ENCODE measurements at regions of chr2 and their contacts with region 1.

Region 1: DNA sequence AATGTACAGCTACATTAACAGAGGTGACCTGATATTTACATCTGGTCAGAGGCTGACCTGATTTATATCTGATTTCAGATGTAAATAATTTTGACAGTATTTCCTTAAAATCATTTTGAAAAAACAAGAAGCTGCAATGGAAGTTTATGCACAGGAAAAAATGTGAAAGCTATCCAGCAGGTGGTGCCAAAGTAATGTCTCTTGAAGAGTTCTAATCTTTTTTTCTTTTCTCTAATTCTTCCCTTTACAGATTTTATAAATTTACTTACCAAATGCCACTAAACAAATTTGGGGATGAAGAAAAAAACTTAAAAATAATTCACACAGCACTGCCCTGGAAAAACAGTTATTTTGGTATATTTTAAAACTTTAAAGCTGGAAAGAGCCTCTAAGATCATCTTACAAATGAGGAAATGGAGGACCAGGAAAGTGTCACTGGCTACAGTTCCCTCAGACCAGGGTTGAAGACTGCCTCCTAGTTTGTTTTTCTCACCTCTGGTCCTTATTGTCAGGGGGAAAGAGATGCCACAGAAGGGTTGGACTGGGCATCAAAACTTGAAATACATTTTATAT is 16.4 kb upstream of the FBLN7 start:
- DNase-seq: peak in 11 of 14 experiments; percentile 20 to 76 (median 45)
- ATAC-seq: no peak
- H3K4me3 ChIP-seq: no peak overlapping the region
- H3K4me3 Mint-ChIP-seq: no peak overlapping the region
- H3K27ac ChIP-seq: no peak overlapping the region
- H3K27ac Mint-ChIP-seq: peak overlapping the region; percentile 35
- H3K4me1 ChIP-seq: no peaks in the 10 kb centered on the region
- H3K4me1 Mint-ChIP-seq: no peaks in the 10 kb centered on the region
- H3K27me3 ChIP-seq: no peaks in the 10 kb centered on the region
- H3K27me3 Mint-ChIP-seq: no peaks in the 10 kb centered on the region
- CTCF ChIP-seq: peak; percentile 80

Region 2: GRCh38 chr2:112108178-112108832 is 13.5 kb before region 1 on chr2:
- CTCF ChIA-PET with region 1: no interaction called
- POLR2A ChIA-PET with region 1: no interaction called
- intact Hi-C with region 1: no loop called
- DNase-seq: no peak
- ATAC-seq: no peak
- H3K4me3 ChIP-seq: no peak overlapping the region
- H3K4me3 Mint-ChIP-seq: no peak overlapping the region
- H3K27ac ChIP-seq: no peak overlapping the region
- H3K27ac Mint-ChIP-seq: no peak overlapping the region
- H3K4me1 ChIP-seq: no peaks in the 10 kb centered on the region
- H3K4me1 Mint-ChIP-seq: no peaks in the 10 kb centered on the region
- H3K27me3 ChIP-seq: no peaks in the 10 kb centered on the region
- H3K27me3 Mint-ChIP-seq: no peaks in the 10 kb centered on the region
- CTCF ChIP-seq: no peak

Region 3: GRCh38 chr2:112134120-112134519 is 12.4 kb after region 1 on chr2:
- CTCF ChIA-PET with region 1: interaction called, 12 read pairs
- POLR2A ChIA-PET with region 1: no interaction called
- intact Hi-C with region 1: no loop called
- DNase-seq: peak in 1 of 14 experiments; percentile 11
- ATAC-seq: no peak
- H3K4me3 ChIP-seq: no peak overlapping the region
- H3K4me3 Mint-ChIP-seq: no peak overlapping the region
- H3K27ac ChIP-seq: no peak overlapping the region
- H3K27ac Mint-ChIP-seq: no peak overlapping the region
- H3K4me1 ChIP-seq: peaks cover 15% of the 10 kb centered on the region
- H3K4me1 Mint-ChIP-seq: peaks cover 13% of the 10 kb centered on the region
- H3K27me3 ChIP-seq: peaks cover 8 to 15% of the 10 kb centered on the region in 2 experiments
- H3K27me3 Mint-ChIP-seq: peaks cover 27% of the 10 kb centered on the region
- CTCF ChIP-seq: no peak

Region 4: DNA sequence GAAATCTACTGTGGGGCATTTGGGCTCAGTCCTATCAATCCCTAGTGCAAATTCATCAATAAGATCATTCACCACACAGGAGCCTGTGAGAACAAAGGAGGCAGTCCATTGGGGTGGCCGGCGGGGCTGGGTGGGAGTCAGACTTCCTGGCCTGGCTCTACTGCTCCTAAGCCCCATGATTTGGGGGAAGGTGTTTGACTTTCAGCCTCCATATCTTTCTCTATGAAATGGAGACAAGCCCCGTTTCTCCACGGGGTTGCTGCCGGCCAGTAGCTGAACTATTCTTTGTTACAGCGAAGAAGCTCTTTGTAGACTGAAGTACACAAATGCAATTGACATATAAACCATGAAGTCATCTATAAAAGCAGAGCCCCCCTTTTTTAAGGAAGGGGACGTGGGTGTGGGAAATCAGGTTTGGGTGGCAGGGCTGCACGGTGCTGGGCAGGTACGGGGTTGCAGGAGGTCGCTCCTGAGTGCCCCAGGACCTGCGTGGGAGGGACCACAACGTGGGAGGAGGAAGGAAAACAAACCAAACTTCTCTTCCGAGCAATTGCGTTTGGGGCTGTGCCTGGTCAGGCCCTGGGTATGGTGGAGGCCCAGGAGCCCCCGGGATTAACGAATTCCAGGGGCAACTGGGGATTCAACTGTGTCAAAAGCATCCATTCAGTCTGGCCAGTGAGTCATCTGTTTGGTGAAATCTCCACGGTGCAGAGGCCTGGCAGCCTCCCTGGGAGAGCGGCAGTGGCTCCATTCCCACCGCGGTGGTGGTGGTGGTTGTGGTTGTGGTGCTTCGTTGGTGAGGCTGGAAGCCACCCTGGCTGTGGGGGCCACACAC is 34.6 kb after region 1 on chr2:
- CTCF ChIA-PET with region 1: interaction called, 3 read pairs
- POLR2A ChIA-PET with region 1: interaction called, 3 read pairs
- intact Hi-C with region 1: loop called in 1 of 2 experiments (anchors 5 kb)
- DNase-seq: peak in 9 of 14 experiments; percentile 11 to 65 (median 44)
- ATAC-seq: no peak
- H3K4me3 ChIP-seq: peak overlapping the region; percentile 47
- H3K4me3 Mint-ChIP-seq: peak overlapping the region; percentile 83
- H3K27ac ChIP-seq: peak overlapping the region; percentile 46 to 60
- H3K27ac Mint-ChIP-seq: peak overlapping the region; percentile 89
- H3K4me1 ChIP-seq: peaks cover 33% of the 10 kb centered on the region
- H3K4me1 Mint-ChIP-seq: peaks cover 31% of the 10 kb centered on the region
- H3K27me3 ChIP-seq: no peaks in the 10 kb centered on the region
- H3K27me3 Mint-ChIP-seq: no peaks in the 10 kb centered on the region
- CTCF ChIP-seq: no peak

Region 5: GRCh38 chr2:112187805-112188596 is 66.2 kb after region 1 on chr2:
- CTCF ChIA-PET with region 1: interaction called, 14 read pairs
- POLR2A ChIA-PET with region 1: no interaction called
- intact Hi-C with region 1: loop called in 1 of 2 experiments (anchors 2 kb)
- DNase-seq: peak; percentile 59 to 93 (median 72)
- ATAC-seq: peak; percentile 82
- H3K4me3 ChIP-seq: peak overlapping the region; percentile 28
- H3K4me3 Mint-ChIP-seq: peak overlapping the region; percentile 56
- H3K27ac ChIP-seq: peak overlapping the region; percentile 90 to 96
- H3K27ac Mint-ChIP-seq: peak overlapping the region; percentile 94
- H3K4me1 ChIP-seq: peaks cover 79% of the 10 kb centered on the region
- H3K4me1 Mint-ChIP-seq: peaks cover 84% of the 10 kb centered on the region
- H3K27me3 ChIP-seq: no peaks in the 10 kb centered on the region
- H3K27me3 Mint-ChIP-seq: no peaks in the 10 kb centered on the region
- CTCF ChIP-seq: no peak

Region 6: DNA sequence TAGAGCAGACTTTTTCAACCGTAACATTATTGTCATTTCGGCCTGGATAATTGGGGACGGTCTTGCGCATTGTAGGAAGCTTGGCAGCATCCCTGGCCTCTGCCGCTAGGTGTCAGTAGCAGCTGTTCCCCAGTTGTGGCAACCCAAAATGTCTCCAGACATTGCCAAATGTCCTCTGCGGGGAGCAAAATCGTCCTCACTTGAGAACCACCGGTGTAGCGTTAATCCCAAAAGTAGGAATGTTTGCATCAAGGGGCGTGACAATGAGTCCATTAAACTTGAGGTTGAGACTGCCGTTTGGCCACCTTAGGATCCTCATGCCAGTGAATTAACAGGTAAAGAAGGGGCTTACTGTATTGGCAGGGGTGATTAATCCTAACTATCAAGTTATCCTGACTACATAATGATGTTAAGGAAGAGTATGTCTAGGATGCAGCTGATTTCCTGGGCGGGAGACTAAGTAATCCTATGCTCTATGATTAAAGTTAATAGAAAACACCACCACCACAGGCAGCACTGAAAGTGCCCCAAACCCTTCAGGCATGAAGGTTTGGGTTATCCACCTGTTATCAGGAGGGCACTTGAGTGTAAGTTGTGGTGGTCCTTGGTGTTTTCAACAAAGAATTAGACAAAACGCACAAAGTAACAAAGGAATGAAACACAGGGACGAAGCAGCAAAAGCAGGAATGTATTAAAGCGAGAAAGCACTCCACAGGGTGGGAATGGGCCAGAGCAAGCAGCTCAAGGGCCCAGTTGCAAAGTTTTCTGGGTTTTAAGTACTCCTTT is 137.9 kb after region 1 on chr2:
- CTCF ChIA-PET with region 1: interaction called, 16 read pairs
- POLR2A ChIA-PET with region 1: interaction called, 7 read pairs
- intact Hi-C with region 1: loop called (anchors 1 to 2 kb)
- DNase-seq: peak; percentile 75 to 91 (median 82)
- ATAC-seq: peak; percentile 51
- H3K4me3 ChIP-seq: no peak overlapping the region
- H3K4me3 Mint-ChIP-seq: peak overlapping the region; percentile 5
- H3K27ac ChIP-seq: no peak overlapping the region
- H3K27ac Mint-ChIP-seq: no peak overlapping the region
- H3K4me1 ChIP-seq: peaks cover 15% of the 10 kb centered on the region
- H3K4me1 Mint-ChIP-seq: peaks cover 7% of the 10 kb centered on the region
- H3K27me3 ChIP-seq: peaks cover 0 to 4% of the 10 kb centered on the region in 2 experiments
- H3K27me3 Mint-ChIP-seq: no peaks in the 10 kb centered on the region
- CTCF ChIP-seq: peak; percentile 97

Region 7: DNA sequence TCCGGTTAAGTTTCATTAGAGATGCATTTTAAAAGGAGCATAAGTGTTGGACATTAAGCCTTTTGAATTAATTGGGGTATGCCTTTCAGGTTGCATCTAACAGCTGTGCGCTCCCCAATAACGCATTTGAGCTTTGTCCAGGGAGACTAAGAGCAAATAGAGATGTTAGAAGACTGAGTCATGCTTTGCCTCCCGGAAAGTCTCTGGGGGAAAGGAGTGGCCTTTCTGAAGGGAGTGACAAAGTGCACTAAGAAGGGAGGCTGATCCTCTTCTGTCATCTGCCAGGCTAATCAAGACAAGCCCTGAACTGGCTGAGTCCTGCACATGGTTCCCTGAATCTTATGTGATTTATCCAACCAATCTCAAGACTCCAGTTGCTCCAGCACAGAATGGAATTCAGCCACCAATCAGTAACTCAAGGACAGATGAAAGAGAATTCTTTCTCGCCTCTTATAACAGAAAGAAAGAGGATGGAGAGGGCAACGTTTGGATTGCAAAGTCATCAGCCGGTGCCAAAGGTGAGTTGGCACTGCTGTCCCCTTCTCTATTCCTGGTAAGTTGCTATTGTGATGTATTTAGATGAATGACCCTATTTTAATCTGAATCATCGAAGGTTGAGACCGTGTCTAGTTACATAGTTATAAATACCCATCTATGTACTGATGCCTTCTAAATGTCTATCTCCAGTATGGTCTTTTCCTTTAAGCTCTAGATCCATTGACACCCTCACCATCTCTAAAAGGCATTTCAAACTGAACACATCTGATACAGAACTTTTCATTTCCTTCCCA is 372.3 kb after region 1 on chr2:
- CTCF ChIA-PET with region 1: no interaction called
- POLR2A ChIA-PET with region 1: no interaction called
- intact Hi-C with region 1: loop called in 1 of 2 experiments (anchors 5 kb)
- DNase-seq: no peak
- ATAC-seq: no peak
- H3K4me3 ChIP-seq: no peak overlapping the region
- H3K4me3 Mint-ChIP-seq: no peak overlapping the region
- H3K27ac ChIP-seq: no peak overlapping the region
- H3K27ac Mint-ChIP-seq: no peak overlapping the region
- H3K4me1 ChIP-seq: no peaks in the 10 kb centered on the region
- H3K4me1 Mint-ChIP-seq: no peaks in the 10 kb centered on the region
- H3K27me3 ChIP-seq: no peaks in the 10 kb centered on the region
- H3K27me3 Mint-ChIP-seq: no peaks in the 10 kb centered on the region
- CTCF ChIP-seq: no peak

Measured in CD4-positive, alpha-beta T cell (primary cell).